ENCODE measurements at regions of chr7 and their contacts with region 1.

Region 1: GRCh38 chr7:129468087-129468486 is 33.9 kb downstream of the STRIP2 start:
- DNase-seq: no peak
- H3K4me3 Mint-ChIP-seq: no peak overlapping the region
- H3K27ac Mint-ChIP-seq: no peak overlapping the region
- H3K4me1 Mint-ChIP-seq: peaks cover 15% of the 10 kb centered on the region
- H3K27me3 Mint-ChIP-seq: no peaks in the 10 kb centered on the region

Region 2: DNA sequence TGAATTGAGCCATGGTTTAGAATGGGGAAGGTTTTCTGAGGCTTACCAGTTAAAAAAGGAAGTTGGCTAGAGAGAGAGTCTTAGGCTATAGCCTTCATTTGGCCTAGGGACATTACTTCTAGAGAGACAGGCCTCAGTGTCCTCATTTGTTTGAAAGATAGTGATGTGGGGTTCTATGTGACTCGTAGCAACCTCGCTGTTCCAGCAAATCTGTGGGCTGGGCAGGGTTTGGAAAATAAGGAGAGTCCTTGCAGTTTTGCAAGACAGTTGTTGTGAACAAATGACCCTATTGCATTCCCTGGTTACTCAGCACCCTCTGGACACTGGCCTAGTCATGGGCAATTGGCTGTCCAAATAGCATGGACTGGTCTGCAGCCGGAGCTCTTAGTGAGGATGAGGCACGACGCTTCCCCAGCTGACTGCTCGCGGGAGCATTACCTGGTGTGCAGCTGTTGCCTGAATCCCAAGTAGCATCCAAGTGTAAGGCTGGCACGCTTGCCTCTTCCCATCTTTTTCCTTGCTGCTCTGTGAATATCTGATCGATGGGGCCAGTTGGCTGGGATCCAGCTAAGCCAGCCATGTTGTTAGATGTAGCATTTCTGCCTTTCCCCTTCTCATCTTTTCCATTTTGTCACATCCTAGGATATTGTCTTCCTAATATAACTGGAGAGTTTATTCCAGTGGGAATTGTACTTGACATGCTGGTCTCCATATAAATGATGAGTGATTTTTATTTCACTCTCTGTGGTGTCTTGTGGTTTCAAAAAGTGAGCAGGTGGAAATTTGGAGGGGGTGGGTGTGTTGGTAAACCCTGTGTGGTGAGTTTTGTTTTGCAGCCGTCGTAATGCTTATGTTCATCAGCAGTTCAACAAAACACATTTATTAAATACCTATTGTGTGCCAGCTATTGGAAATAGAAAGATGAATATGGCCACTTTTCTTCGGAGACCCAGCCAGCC is 1716.3 kb before region 1 on chr7:
- intact Hi-C with region 1: no loop called
- DNase-seq: no peak
- H3K4me3 Mint-ChIP-seq: no peak overlapping the region
- H3K27ac Mint-ChIP-seq: peak overlapping the region; percentile 21
- H3K4me1 Mint-ChIP-seq: peaks cover 31% of the 10 kb centered on the region
- H3K27me3 Mint-ChIP-seq: no peaks in the 10 kb centered on the region

Region 3: GRCh38 chr7:129224251-129225205 is 243.6 kb before region 1 on chr7 and contains the start of gene AHCYL2:
- intact Hi-C with region 1: loop called (anchors 1 kb)
- DNase-seq: peak; percentile 98
- H3K4me3 Mint-ChIP-seq: peak within 1 kb of the TSS; percentile 87
- H3K27ac Mint-ChIP-seq: peak within 1 kb of the TSS; percentile 96
- H3K4me1 Mint-ChIP-seq: peaks cover 24% of the 10 kb centered on the region
- H3K27me3 Mint-ChIP-seq: no peaks in the 10 kb centered on the region
- total RNA-seq, gene AHCYL2: 10.7 and 11.1 TPM in 2 replicates

Region 4: GRCh38 chr7:129343099-129343700 is 124.9 kb before region 1 on chr7:
- intact Hi-C with region 1: loop called (anchors 1 kb)
- DNase-seq: peak; percentile 76
- H3K4me3 Mint-ChIP-seq: no peak overlapping the region
- H3K27ac Mint-ChIP-seq: no peak overlapping the region
- H3K4me1 Mint-ChIP-seq: peaks cover 37% of the 10 kb centered on the region
- H3K27me3 Mint-ChIP-seq: no peaks in the 10 kb centered on the region

Region 5: GRCh38 chr7:129367700-129368388 is 100.2 kb before region 1 on chr7:
- intact Hi-C with region 1: loop called (anchors 1 kb)
- DNase-seq: peak; percentile 93
- H3K4me3 Mint-ChIP-seq: peak overlapping the region; percentile 73
- H3K27ac Mint-ChIP-seq: peak overlapping the region; percentile 89
- H3K4me1 Mint-ChIP-seq: peaks cover 37% of the 10 kb centered on the region
- H3K27me3 Mint-ChIP-seq: no peaks in the 10 kb centered on the region

Region 6: DNA sequence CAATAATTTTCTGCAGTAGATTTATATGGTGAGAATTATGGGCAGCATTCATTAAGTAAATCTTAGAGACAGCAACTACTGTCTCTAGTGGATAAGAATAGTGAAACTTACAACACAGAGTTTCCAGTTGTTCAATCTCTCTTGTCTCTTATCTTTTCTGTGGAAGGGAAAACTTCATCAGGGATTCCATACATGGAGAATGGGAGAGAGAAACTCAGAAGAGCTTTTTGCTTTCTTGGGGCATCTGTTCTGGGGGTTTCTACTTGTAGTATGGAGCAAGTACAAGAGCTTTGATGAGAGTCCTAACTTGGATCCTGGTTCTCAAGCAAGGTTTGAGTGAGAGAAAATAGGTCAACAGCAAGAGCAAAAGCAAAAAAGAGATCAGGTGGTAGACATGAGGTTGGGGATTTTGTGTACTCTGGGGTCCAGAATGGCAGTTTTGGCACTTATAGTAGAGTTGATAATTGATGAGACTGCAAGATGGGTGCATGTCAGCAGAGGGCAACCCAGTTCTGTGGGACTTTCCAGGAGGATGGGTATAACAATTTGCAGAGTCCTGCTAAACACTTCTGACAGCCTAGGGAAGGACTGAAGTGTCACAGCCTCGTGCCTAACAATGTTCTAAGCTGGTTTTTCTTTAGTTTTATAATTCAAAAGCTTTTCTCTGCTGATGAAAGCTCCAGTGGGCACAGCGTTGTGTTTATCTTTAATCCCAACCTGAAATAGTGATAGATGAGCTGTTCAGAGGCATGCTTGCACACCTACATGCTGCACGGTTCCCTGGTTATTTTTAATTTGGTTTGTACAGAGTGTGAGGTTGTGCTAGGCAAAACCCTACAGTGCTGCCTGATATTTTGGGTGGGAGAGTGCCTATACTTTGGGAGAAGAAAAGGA is 65.9 kb before region 1 on chr7:
- intact Hi-C with region 1: loop called (anchors 1 kb)
- DNase-seq: peak; percentile 73
- H3K4me3 Mint-ChIP-seq: no peak overlapping the region
- H3K27ac Mint-ChIP-seq: peak overlapping the region; percentile 6
- H3K4me1 Mint-ChIP-seq: peaks cover 20% of the 10 kb centered on the region
- H3K27me3 Mint-ChIP-seq: no peaks in the 10 kb centered on the region

Region 7: DNA sequence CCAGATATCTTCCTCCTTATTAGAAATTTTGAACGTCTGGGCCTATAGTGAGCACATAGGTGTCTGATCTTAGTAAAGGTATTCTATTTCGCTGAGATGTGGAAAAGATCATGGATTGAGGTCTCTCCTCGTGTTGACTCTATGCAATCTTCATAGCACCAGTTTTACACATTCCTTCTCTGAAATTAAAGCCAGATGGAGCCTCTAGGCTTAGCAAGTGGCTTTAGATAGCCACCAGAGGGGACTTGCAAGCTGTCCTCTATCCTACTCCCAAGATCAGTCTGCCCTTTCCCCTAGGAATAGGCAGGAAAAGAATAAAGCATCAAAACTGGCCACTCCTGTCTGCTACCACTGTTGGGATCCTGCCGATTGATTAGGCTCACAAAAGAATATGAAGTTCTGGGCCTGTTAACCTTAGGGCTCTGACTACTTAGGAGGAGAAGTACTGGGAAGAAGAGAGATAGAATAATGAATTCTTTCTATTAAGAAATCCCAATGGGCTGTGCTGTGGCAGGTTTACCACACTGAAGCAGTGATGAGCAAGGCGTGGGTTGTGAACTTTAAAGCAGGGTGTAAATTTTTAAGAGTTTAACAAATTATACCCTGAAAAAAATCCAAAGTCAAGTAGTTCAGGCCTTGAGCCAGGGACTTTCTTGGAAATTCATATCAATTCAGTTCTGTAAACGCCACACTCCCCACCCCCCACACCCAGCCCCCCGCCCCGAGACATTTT is 36.0 kb before region 1 on chr7:
- intact Hi-C with region 1: no loop called
- DNase-seq: no peak
- H3K4me3 Mint-ChIP-seq: no peak overlapping the region
- H3K27ac Mint-ChIP-seq: no peak overlapping the region
- H3K4me1 Mint-ChIP-seq: peaks cover 29% of the 10 kb centered on the region
- H3K27me3 Mint-ChIP-seq: peaks cover 6% of the 10 kb centered on the region